ENCODE measurements at regions of chr5 and their contacts with region 1.

Region 1: GRCh38 chr5:160439205-160439600 is 17.5 kb downstream of the PTTG1 start:
- DNase-seq: peak; percentile 93
- H3K4me3 Mint-ChIP-seq: peak overlapping the region; percentile 80
- H3K27ac Mint-ChIP-seq: peak overlapping the region; percentile 94
- H3K4me1 Mint-ChIP-seq: peaks cover 30% of the 10 kb centered on the region
- H3K27me3 Mint-ChIP-seq: no peaks in the 10 kb centered on the region

Region 2: GRCh38 chr5:160418561-160419457 is 20.4 kb before region 1 on chr5 and contains the start of gene SLU7:
- CTCF ChIA-PET with region 1: interaction called, 118 read pairs
- POLR2A ChIA-PET with region 1: interaction called, 8 read pairs
- intact Hi-C with region 1: loop called (anchors 1 kb)
- DNase-seq: peak; percentile 97
- H3K4me3 Mint-ChIP-seq: peak within 1 kb of the TSS; percentile 98
- H3K27ac Mint-ChIP-seq: peak within 1 kb of the TSS; percentile 93
- H3K4me1 Mint-ChIP-seq: peaks cover 52% of the 10 kb centered on the region
- H3K27me3 Mint-ChIP-seq: no peaks in the 10 kb centered on the region
- total RNA-seq, gene SLU7: 45.9 to 46.4 TPM

Region 3: GRCh38 chr5:160467555-160468362 is 28.6 kb after region 1 on chr5:
- CTCF ChIA-PET with region 1: interaction called, 115 read pairs
- POLR2A ChIA-PET with region 1: interaction called, 37 read pairs
- intact Hi-C with region 1: loop called (anchors 1 kb)
- DNase-seq: peak; percentile 91
- H3K4me3 Mint-ChIP-seq: peak overlapping the region; percentile 98
- H3K27ac Mint-ChIP-seq: peak overlapping the region; percentile 98
- H3K4me1 Mint-ChIP-seq: peaks cover 65% of the 10 kb centered on the region
- H3K27me3 Mint-ChIP-seq: no peaks in the 10 kb centered on the region

Region 4: DNA sequence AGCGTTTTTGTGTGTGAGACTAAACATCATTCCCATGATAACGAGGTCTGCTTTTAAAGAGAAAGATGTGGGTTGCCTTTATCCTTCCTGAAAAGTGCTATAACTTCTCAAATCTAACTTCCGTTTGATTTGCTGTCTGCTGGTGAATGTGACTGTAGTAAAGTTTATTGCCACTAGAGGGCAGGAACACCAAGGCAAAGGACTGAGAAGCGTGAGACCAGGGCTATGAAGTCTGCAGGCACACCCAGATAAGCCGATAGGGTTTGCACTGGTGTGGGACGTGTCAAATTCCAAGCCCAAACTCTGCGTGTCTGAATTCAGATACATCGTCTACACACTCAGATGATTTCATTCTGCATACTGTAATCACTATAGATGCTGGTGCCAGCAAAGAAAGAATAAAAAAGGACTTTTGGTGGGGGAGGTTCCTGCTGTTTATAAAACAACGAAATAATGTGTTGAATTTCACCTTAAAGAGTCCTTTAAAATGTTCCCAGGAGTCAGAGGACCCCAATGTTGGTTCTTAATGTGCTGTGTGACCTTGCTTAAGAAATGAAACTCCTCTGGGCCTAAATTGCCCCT is 69.7 kb after region 1 on chr5:
- CTCF ChIA-PET with region 1: interaction called, 155 read pairs
- POLR2A ChIA-PET with region 1: interaction called, 23 read pairs
- intact Hi-C with region 1: loop called (anchors 1 kb)
- DNase-seq: peak; percentile 76
- H3K4me3 Mint-ChIP-seq: peak overlapping the region; percentile 34
- H3K27ac Mint-ChIP-seq: peak overlapping the region; percentile 75
- H3K4me1 Mint-ChIP-seq: peaks cover 40% of the 10 kb centered on the region
- H3K27me3 Mint-ChIP-seq: no peaks in the 10 kb centered on the region

Region 5: DNA sequence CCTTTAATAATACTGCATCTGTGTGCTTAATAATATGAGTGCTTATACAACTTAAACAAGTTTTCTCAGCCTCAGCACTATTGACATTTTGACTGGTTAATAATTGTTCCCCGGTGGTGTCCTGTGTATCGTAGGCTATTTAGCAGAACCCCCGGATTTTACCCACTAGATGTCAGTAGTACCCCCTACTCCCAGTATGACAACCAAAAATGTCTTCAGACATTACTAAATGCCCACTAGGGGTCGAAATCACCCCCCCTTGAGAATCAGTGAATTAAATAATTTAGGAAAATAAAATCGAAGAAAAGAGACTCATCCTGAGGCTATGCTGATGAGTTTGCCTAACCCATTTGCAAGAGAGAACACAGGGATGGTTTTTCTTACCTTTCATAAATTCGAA is 246.5 kb after region 1 on chr5:
- CTCF ChIA-PET with region 1: no interaction called
- POLR2A ChIA-PET with region 1: no interaction called
- intact Hi-C with region 1: loop called (anchors 10 kb)
- DNase-seq: no peak
- H3K4me3 Mint-ChIP-seq: no peak overlapping the region
- H3K27ac Mint-ChIP-seq: no peak overlapping the region
- H3K4me1 Mint-ChIP-seq: no peaks in the 10 kb centered on the region
- H3K27me3 Mint-ChIP-seq: no peaks in the 10 kb centered on the region

Region 6: GRCh38 chr5:161420521-161420920 is 981.3 kb after region 1 on chr5:
- CTCF ChIA-PET with region 1: no interaction called
- POLR2A ChIA-PET with region 1: no interaction called
- intact Hi-C with region 1: loop called (anchors 5 kb)
- DNase-seq: no peak
- H3K4me3 Mint-ChIP-seq: no peak overlapping the region
- H3K27ac Mint-ChIP-seq: no peak overlapping the region
- H3K4me1 Mint-ChIP-seq: no peaks in the 10 kb centered on the region
- H3K27me3 Mint-ChIP-seq: no peaks in the 10 kb centered on the region